ENCODE measurements at regions of chr18 and their contacts with region 1.

Region 1: GRCh38 chr18:62790871-62791772 is 75.8 kb downstream of the PHLPP1 start:
- DNase-seq: no peak
- H3K4me3 ChIP-seq: no peak overlapping the region
- H3K27ac ChIP-seq: no peak overlapping the region
- H3K4me1 ChIP-seq: peaks cover 28% of the 10 kb centered on the region
- H3K27me3 ChIP-seq: no peaks in the 10 kb centered on the region
- CTCF ChIP-seq: no peak

Region 2: DNA sequence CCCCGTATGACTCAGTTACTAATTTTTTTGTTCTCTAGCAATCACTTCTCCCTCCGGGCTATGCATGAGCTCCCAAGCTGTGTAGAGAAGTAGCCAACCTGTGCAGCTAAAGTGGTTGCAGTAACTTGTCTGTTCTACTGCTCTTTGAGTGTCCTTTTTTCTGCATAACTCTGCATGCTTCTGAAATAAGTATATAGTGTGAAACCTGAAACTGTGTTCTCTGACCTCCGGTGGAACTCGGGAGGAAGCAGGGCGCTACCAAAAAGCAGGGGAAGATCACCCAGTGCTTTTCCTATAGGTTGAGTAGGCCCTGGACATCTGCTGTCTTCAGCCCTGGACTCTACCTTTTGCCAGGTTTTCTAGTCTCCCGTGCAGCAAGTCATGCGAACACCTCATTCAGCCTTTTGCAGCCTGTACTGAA is 28.0 kb before region 1 on chr18:
- CTCF ChIA-PET with region 1: no interaction called
- POLR2A ChIA-PET with region 1: interaction called, 11 read pairs
- intact Hi-C with region 1: no loop called
- DNase-seq: peak; percentile 27 to 66
- H3K4me3 ChIP-seq: no peak overlapping the region
- H3K27ac ChIP-seq: peak overlapping the region; percentile 31
- H3K4me1 ChIP-seq: peaks cover 60% of the 10 kb centered on the region
- H3K27me3 ChIP-seq: no peaks in the 10 kb centered on the region
- CTCF ChIP-seq: no peak

Region 3: GRCh38 chr18:62771494-62772270 is 19.4 kb before region 1 on chr18:
- CTCF ChIA-PET with region 1: no interaction called
- POLR2A ChIA-PET with region 1: interaction called, 10 read pairs
- intact Hi-C with region 1: no loop called
- DNase-seq: no peak
- H3K4me3 ChIP-seq: no peak overlapping the region
- H3K27ac ChIP-seq: no peak overlapping the region
- H3K4me1 ChIP-seq: peaks cover 15% of the 10 kb centered on the region
- H3K27me3 ChIP-seq: no peaks in the 10 kb centered on the region
- CTCF ChIP-seq: no peak

Region 4: DNA sequence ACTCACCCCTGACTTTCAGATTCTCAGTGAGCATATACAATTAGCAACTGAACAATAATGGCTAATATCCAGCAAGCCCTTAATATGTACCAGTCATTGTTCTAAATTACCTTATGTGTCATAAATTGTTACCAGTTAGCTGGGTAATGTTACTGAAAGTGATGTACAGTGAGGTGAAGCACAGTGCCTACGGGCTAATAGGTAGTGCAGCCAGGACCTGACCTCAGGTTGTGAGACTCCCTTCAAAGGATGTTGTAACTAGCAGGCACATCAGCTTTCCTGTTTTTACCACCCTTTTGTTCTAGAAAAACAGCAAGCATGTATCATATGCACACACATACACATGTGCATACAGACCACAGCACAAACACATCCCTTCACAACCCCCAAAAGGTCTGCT is 182.6 kb after region 1 on chr18:
- CTCF ChIA-PET with region 1: no interaction called
- POLR2A ChIA-PET with region 1: no interaction called
- intact Hi-C with region 1: no loop called
- DNase-seq: no peak
- H3K4me3 ChIP-seq: no peak overlapping the region
- H3K27ac ChIP-seq: no peak overlapping the region
- H3K4me1 ChIP-seq: no peaks in the 10 kb centered on the region
- H3K27me3 ChIP-seq: no peaks in the 10 kb centered on the region
- CTCF ChIP-seq: no peak

Measured in PC-9 (cell line).